ENCODE measurements at regions of chr12 and their contacts with region 1.

Region 1: GRCh38 chr12:122190842-122191668 is 8.1 kb downstream of the LRRC43 start:
- DNase-seq: peak in 33 of 35 experiments; percentile 25 to 75 (median 57)
- ATAC-seq: peak; percentile 60 to 84 (median 76)
- H3K4me3 ChIP-seq: no peak overlapping the region
- H3K4me3 Mint-ChIP-seq: no peak overlapping the region
- H3K27ac ChIP-seq: no peak overlapping the region
- H3K27ac Mint-ChIP-seq: no peak overlapping the region
- H3K4me1 ChIP-seq: peaks cover 0 to 6% of the 10 kb centered on the region in 2 experiments
- H3K4me1 Mint-ChIP-seq: no peaks in the 10 kb centered on the region
- H3K27me3 ChIP-seq: peaks cover 0 to 22% of the 10 kb centered on the region in 2 experiments
- H3K27me3 Mint-ChIP-seq: peaks cover 0 to 4% of the 10 kb centered on the region in 2 donors

Region 2: GRCh38 chr12:122130150-122130549 is 60.9 kb before region 1 on chr12:
- CTCF ChIA-PET with region 1: interaction called in 1 of 2 experiments, 10 read pairs
- POLR2A ChIA-PET with region 1: no interaction called
- DNase-seq: no peak
- ATAC-seq: no peak
- H3K4me3 ChIP-seq: no peak overlapping the region
- H3K4me3 Mint-ChIP-seq: no peak overlapping the region
- H3K27ac ChIP-seq: no peak overlapping the region
- H3K27ac Mint-ChIP-seq: no peak overlapping the region
- H3K4me1 ChIP-seq: peaks cover 2 to 11% of the 10 kb centered on the region in 2 experiments
- H3K4me1 Mint-ChIP-seq: peaks cover 11 to 14% (median 12%) of the 10 kb centered on the region in 3 donors
- H3K27me3 ChIP-seq: no peaks in the 10 kb centered on the region
- H3K27me3 Mint-ChIP-seq: no peaks in the 10 kb centered on the region

Region 3: GRCh38 chr12:122345042-122345441 is 154.0 kb after region 1 on chr12:
- CTCF ChIA-PET with region 1: no interaction called
- POLR2A ChIA-PET with region 1: interaction called in 1 of 2 experiments, 11 read pairs
- DNase-seq: no peak
- ATAC-seq: no peak
- H3K4me3 ChIP-seq: no peak overlapping the region
- H3K4me3 Mint-ChIP-seq: no peak overlapping the region
- H3K27ac ChIP-seq: no peak overlapping the region
- H3K27ac Mint-ChIP-seq: no peak overlapping the region
- H3K4me1 ChIP-seq: no peaks in the 10 kb centered on the region
- H3K4me1 Mint-ChIP-seq: no peaks in the 10 kb centered on the region
- H3K27me3 ChIP-seq: no peaks in the 10 kb centered on the region
- H3K27me3 Mint-ChIP-seq: no peaks in the 10 kb centered on the region

Measured in T-cell (primary cell).